Dorsolateral prefrontal cortex (tissue), 120 donors: ENCODE measurements at regions of chr4 and their contacts with region 1.

Region 1: DNA sequence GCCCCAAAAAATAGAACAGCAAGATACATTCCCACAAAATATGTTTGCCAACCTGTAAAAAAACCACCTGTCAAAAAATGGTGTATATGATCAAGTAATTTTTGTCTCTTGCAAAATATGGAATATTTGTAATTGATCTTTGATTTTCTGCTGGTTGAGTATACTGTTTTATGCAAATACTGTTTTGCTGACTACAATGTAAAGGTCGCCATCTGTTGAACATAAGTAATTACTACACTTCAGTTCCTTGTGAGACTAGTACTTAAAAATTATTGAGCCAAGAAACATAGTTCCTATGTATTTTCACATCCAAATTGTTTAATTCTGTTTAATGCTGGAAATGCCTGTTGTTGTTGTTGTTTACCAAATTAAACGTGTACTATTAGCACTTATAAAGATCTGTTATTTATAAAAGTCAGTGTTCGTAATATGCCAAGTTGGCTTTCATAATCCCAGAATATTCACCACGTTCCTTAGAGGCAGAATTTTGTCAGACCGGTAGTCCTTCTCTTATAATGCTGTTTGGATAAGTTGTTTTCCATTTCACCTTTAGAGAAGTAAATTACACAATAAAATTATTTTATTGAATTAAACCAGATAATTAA is 144.2 kb downstream of the PDLIM5 start:
- DNase-seq: no peak
- H3K4me3 ChIP-seq: no peak overlapping the region
- H3K27ac ChIP-seq: no peak overlapping the region
- H3K27me3 ChIP-seq: no peaks in the 10 kb centered on the region
- CTCF ChIP-seq: peak; percentile 50 to 88 (median 73)

Region 2: DNA sequence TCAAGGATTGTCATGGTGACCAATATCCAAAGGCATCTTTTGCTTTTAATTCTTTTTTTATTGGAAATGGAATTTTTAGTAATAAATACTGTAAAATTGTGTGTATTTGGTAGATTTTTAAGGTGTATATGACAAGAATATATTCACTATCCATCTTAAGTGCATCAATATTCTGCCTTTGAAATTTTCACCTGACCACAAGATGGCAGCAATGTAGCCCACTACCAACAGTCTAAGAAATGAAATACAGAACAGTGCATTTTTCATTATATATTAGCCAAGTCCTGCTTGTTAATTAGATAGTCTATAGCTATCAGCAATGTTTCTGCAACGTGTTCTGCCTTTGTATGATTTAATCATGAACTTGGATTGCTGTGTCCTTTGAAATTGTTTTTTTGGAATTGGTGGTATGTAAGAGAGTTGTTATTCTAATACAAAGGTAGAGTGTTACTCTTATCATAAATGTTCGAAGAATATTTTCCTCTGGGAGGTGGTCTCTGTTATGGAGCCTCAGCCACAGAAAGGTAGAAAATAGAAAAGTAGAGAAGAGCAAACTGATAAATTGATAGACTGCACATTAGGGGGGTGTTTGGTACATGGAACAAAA is 291.5 kb before region 1 on chr4:
- intact Hi-C with region 1: loop called in 1 of 2 experiments (anchors 10 kb)
- DNase-seq: no peak
- H3K4me3 ChIP-seq: no peak overlapping the region
- H3K27ac ChIP-seq: no peak overlapping the region
- H3K27me3 ChIP-seq: no peaks in the 10 kb centered on the region
- CTCF ChIP-seq: peak in 55 of 56 donors; percentile 37 to 82 (median 61)

Region 3: DNA sequence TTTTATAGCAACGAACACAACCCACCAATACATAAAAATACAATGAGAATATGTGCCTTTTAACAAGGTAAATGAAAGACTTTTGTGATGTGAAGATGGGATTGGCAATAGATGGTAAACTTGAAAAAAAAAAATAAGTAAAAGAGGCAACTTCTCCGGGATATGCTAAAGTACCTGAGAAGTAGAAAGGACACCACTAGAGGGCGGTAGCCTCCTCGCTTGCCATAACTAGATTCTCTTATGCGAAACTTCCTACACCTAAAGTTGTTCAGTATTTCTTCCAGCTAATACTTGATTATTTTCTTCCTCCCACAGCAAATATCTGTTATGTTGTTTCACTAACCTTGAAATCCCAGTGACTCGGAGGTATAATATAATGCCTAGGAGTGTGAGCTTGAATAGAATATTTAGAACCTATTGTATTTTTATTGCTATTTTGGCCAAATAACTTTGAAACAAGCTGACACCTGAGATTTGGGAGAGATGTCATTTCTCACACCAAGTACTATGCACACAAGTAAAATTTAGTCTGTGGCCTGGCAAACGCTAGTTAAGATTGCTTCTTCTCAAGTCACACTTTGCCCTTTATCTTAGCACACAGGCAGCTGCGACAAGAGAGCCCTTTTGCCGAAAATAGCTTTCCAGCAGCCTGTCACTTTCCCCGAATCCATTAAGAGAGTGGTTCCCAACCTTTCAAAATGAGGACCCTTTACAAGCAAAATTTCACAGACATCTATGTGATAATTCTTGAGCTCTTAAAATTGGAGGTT is 189.1 kb before region 1 on chr4:
- intact Hi-C with region 1: loop called (anchors 2 to 5 kb)
- DNase-seq: peak in 9 of 10 donors; percentile 19 to 85 (median 51)
- H3K4me3 ChIP-seq: peak overlapping the region in 25 of 59 donors; percentile 0 to 46 (median 19)
- H3K27ac ChIP-seq: no peak overlapping the region
- H3K27me3 ChIP-seq: peaks cover 0 to 4% (median 0%) of the 10 kb centered on the region in 45 donors
- CTCF ChIP-seq: peak; percentile 70 to 96 (median 85)

Region 4: GRCh38 chr4:94451695-94452475 is 144.1 kb before region 1 on chr4 and contains the start of gene PDLIM5:
- intact Hi-C with region 1: loop called in 1 of 2 experiments (anchors 10 kb)
- DNase-seq: peak; percentile 44 to 92 (median 82)
- H3K4me3 ChIP-seq: peak within 1 kb of the TSS; percentile 66 to 99 (median 91)
- H3K27ac ChIP-seq: peak within 1 kb of the TSS; percentile 27 to 97 (median 89)
- H3K27me3 ChIP-seq: peaks cover 0 to 2% (median 0%) of the 10 kb centered on the region in 45 donors
- CTCF ChIP-seq: peak in 34 of 56 donors; percentile 6 to 56 (median 24)
- total RNA-seq, gene PDLIM5: 31.7 to 134 (median 55.5) TPM